ENCODE measurements at regions of chr1 and their contacts with region 1.

Region 1: DNA sequence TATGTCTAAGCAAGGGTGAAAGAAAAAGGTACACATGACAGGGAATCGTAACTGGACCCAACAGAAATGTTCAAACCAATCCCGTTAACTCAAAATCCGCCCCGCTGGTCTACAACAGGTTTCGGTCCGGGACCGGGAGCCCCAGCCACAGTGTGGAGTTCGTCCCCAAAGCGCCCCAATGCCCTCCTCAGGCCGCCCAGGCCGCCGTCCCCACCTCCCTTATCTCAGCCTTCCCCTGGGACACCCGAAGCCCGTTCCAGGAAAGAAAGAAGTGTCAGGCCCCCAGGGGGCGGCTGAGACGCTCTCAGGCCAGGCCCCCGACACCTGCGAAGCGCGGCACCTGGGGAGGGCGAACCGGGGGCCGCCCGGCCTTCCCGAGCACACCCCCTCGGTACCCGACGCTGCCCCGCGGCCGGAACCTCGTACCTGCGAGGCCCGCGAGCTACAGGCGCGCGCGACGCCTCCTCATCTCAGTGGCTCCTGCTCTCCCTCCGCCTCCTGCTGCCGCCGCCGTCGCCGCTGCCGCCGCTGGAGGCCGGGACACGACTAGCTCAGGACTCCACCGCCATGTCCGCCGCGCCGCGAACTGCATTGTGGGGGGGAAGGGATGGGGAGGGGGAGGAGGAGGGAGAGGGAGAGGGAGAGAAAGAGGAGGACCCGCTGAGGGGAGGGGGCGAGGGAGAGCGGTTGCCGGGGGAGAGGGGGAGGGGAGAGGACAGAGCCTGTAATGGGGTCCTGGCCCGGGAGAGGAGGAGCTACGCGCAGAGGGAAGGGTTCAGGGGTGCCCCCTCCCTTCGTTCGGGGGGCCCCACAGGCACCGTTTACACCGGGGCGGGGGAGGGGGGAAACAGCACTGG is at the start of gene TUT4:
- DNase-seq: peak; percentile 81
- ATAC-seq: peak; percentile 51
- H3K4me3 Mint-ChIP-seq: peak within 1 kb of the TSS; percentile 70
- H3K27ac Mint-ChIP-seq: peak within 1 kb of the TSS; percentile 73
- H3K4me1 Mint-ChIP-seq: peaks cover 14% of the 10 kb centered on the region
- H3K27me3 Mint-ChIP-seq: peaks cover 2% of the 10 kb centered on the region
- total RNA-seq, gene TUT4: 104 to 110 TPM

Region 2: DNA sequence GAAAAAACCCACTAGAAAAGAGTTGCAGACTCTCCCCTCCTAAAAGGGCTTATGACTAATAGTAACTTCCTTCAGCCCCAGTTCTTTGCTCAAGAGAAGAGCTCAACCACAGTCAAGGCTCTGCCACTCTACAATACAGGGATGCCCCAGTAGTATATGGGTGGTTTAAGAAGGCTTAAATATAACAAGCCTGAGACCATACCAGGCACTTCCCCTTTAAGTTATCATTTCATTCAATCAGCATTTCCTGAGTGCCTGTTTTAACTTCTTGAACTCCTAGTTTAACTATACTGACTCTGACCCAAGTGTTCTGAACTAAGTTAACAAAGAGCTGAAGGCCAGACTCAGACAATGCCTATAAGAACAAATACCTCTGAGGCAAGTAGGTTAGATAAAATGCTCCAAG is 128.5 kb before region 1 on chr1:
- POLR2A ChIA-PET with region 1: interaction called, 10 read pairs
- DNase-seq: no peak
- ATAC-seq: peak; percentile 90
- H3K4me3 Mint-ChIP-seq: peak overlapping the region; percentile 28
- H3K27ac Mint-ChIP-seq: peak overlapping the region; percentile 78
- H3K4me1 Mint-ChIP-seq: peaks cover 35% of the 10 kb centered on the region
- H3K27me3 Mint-ChIP-seq: no peaks in the 10 kb centered on the region

Region 3: GRCh38 chr1:52567943-52568342 is 15.2 kb after region 1 on chr1:
- POLR2A ChIA-PET with region 1: interaction called, 11 read pairs
- DNase-seq: no peak
- ATAC-seq: no peak
- H3K4me3 Mint-ChIP-seq: no peak overlapping the region
- H3K27ac Mint-ChIP-seq: no peak overlapping the region
- H3K4me1 Mint-ChIP-seq: peaks cover 16% of the 10 kb centered on the region
- H3K27me3 Mint-ChIP-seq: peaks cover 8% of the 10 kb centered on the region

Region 4: DNA sequence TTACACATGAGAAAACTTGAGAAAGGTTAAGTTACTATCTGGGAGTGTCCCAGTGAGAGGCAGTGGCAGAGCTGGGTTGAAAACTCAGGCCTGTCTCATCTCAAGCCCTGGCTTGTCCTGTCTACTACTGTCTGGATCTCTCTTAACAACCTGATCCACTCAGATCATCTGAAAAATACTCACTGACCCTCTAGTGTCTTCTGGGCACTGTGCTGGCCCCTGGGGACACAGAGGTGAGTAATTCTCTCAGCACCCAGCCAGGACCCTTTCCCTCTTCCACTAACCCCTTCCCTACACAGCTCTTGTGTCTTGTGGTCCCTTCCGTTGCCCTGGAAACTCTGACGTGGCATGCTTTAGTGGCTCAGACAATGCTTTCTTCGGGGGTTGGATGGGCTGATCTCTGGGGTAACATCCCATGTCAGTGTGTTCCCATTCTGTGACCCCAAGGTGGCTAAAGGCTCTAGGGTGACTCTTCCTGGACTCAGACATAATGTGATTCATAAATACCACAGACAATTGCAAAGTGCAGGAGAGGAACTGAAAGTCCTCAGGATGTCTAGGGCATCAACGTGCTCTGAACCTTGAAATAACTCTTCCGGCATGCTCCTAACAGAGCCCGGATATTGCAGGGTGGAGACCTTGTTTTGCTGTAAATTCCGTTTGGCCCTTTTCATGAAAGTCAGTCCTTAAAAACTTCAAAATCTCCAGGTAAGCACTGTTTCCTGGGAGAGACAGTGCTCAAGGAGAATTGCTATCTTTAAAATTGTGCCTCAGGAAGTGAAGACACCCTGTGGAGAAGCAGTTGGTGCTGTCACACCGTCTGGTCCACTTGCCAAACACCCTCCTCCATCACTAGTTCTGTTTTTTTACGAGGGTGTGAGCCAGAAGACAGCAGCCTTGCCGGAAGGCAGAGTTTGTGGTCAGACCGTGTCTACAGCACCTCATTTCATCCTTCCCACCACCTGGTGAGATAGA is 84.3 kb after region 1 on chr1:
- POLR2A ChIA-PET with region 1: interaction called, 34 read pairs
- DNase-seq: peak; percentile 71
- ATAC-seq: peak; percentile 65
- H3K4me3 Mint-ChIP-seq: peak overlapping the region; percentile 82
- H3K27ac Mint-ChIP-seq: peak overlapping the region; percentile 100
- H3K4me1 Mint-ChIP-seq: peaks cover 55% of the 10 kb centered on the region
- H3K27me3 Mint-ChIP-seq: no peaks in the 10 kb centered on the region

Region 5: GRCh38 chr1:52702886-52703787 is 150.4 kb after region 1 on chr1:
- POLR2A ChIA-PET with region 1: interaction called, 10 read pairs
- DNase-seq: peak; percentile 77
- ATAC-seq: peak; percentile 94
- H3K4me3 Mint-ChIP-seq: peak overlapping the region; percentile 81
- H3K27ac Mint-ChIP-seq: peak overlapping the region; percentile 89
- H3K4me1 Mint-ChIP-seq: peaks cover 31% of the 10 kb centered on the region
- H3K27me3 Mint-ChIP-seq: peaks cover 3% of the 10 kb centered on the region

Measured in activated naive CD8-positive, alpha-beta T cell treated with anti-CD3 and anti-CD28 coated beads, Interleukin-2, amount 10 ng/mL, durations not matched to agents 7 days and 5 days (primary cell).